ACHN (cell line): ENCODE measurements at regions of chr2 and their contacts with region 1.

Region 1: GRCh38 chr2:55771612-55772011 is 78.0 kb upstream of the PNPT1 start:
- DNase-seq: peak; percentile 52

Region 2: DNA sequence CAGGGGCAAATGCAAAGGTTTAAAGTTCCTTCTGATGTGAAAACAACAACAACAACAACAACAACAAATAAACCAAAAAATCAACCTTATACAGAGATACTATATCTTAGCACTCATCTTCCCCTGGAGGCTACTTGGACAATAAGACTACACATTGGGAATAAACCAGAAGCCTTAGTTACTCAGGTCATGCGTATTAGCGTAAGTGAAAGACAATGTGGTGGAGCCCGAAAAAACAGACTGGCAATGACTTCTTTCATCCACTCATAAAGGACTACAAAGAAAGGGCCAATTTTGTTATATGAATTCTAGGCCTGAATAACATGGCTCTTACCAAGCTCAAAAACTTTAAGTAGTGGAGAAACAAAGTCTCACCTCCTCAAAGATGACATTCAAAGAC is 134.8 kb before region 1 on chr2:
- in situ Hi-C with region 1: no loop called
- DNase-seq: no peak

Region 3: GRCh38 chr2:55961318-55961911 is 189.8 kb after region 1 on chr2:
- in situ Hi-C with region 1: loop called (anchors 25 kb)
- DNase-seq: peak; percentile 60